Panc1 (cell line): ENCODE measurements at regions of chr6 and their contacts with region 1.

Region 1: GRCh38 chr6:30877419-30878371 is 6.6 kb upstream of the DDR1 start:
- DNase-seq: peak; percentile 73
- ATAC-seq: peak; percentile 90
- H3K4me3 ChIP-seq: peak overlapping the region; percentile 19 to 57; a peak in 3 of 4 replicates
- H3K27ac ChIP-seq: peak overlapping the region; percentile 82
- H3K4me1 ChIP-seq: peaks cover 23% of the 10 kb centered on the region
- H3K27me3 ChIP-seq: no peaks in the 10 kb centered on the region
- CTCF ChIP-seq: peak; percentile 96

Region 2: DNA sequence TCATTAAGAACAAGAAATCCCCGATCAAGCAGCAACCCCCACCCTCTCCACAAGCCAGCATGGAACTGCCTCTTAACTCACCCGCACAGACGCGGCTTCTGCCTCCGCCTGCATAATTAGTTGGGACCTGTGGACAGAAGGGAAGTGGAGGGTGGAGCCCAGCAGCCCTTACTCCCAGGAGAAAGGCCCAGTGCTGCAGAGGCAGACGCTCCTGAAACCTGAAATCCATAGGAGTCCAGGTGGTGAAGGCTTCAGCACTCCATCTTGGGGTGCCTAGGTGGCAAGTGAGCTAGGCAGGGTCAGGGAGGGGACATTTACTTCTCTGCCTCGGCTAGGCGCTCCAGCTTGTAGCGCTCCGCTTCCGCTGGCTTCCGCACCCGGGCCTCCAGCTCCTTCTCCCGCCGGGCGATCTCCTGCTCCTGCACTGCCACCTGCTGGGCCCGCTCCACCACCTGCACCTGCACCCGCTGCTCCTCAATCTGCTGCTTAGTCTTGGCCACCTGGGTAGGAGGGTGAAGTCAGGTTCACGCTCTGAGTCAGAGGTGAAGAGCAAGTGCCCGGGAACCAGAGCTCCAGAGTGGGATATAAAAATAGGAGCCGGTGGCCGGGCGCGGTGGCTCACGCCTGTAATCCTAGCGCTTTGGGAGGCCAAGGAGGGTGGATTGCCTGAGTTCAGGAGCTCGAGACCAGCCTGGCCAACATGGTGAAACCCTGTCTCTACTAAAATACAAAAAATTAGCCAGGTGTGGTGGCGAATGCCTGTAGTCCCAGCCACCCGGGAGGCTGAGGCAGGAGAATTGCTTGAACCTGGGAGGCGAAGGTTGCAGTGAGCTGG is 146.9 kb before region 1 on chr6:
- CTCF ChIA-PET with region 1: interaction called, 4 read pairs
- POLR2A ChIA-PET with region 1: no interaction called
- in situ Hi-C with region 1: no loop called
- intact Hi-C with region 1: loop called (anchors 5 kb)
- DNase-seq: no peak
- ATAC-seq: peak; percentile 59
- H3K4me3 ChIP-seq: no peak overlapping the region
- H3K27ac ChIP-seq: no peak overlapping the region
- H3K4me1 ChIP-seq: 0 out of 2 replicates have a peak, but pooled peaks cover 4% of the 10 kb centered on the region
- H3K27me3 ChIP-seq: no peaks in the 10 kb centered on the region
- CTCF ChIP-seq: peak; percentile 83

Region 3: DNA sequence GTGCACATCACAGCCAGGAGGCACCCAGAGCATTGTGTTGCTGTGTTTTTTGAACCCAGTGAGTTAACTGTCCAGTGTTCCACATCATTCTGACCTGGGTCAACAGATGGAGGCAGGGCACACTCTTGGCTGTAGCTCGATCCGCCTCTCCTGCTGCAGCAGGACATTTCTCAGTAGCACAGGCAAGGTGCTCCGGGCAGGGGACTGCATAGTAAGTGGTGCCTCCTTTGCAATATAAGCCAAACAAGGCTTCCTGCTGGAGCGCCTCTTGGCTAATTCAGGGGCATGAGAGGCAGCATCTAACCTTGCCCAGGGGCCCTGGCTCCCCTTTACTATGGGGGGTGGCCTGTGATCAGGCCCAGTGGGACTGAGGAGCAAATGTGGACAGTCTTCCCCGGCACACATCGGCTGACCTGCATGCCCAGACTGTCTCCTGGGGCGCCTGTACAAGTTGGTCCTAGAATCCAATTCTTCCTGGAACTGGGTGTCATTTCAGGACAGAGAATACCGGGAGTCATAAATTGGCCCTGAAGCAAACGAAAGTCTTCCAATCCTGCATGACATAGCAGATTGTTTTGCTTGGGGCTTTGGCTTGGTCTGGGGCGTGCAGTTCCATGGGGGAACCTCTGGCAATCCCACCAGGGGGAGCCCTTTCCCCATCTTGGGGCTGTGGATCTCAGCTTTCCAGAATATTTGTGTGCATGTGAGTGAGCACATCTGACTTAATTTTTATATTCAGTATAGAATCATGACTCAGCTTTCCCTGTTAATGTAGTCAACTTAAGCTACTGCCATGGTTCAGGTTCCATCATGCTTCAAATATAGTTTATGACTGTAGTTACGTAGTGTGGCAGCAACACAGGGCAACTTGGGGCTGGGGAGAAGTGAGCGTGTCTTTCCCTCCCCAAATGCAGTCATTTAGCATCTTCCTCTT is 49.4 kb before region 1 on chr6:
- CTCF ChIA-PET with region 1: interaction called, 4 read pairs
- POLR2A ChIA-PET with region 1: no interaction called
- in situ Hi-C with region 1: no loop called
- intact Hi-C with region 1: loop called (anchors 1 kb)
- DNase-seq: no peak
- ATAC-seq: peak; percentile 95
- H3K4me3 ChIP-seq: peak overlapping the region in 1 of 2 experiments; percentile 29; a peak in 2 of 4 replicates
- H3K27ac ChIP-seq: peak overlapping the region; percentile 85
- H3K4me1 ChIP-seq: peaks cover 28% of the 10 kb centered on the region
- H3K27me3 ChIP-seq: no peaks in the 10 kb centered on the region
- CTCF ChIP-seq: peak; percentile 95

Region 4: DNA sequence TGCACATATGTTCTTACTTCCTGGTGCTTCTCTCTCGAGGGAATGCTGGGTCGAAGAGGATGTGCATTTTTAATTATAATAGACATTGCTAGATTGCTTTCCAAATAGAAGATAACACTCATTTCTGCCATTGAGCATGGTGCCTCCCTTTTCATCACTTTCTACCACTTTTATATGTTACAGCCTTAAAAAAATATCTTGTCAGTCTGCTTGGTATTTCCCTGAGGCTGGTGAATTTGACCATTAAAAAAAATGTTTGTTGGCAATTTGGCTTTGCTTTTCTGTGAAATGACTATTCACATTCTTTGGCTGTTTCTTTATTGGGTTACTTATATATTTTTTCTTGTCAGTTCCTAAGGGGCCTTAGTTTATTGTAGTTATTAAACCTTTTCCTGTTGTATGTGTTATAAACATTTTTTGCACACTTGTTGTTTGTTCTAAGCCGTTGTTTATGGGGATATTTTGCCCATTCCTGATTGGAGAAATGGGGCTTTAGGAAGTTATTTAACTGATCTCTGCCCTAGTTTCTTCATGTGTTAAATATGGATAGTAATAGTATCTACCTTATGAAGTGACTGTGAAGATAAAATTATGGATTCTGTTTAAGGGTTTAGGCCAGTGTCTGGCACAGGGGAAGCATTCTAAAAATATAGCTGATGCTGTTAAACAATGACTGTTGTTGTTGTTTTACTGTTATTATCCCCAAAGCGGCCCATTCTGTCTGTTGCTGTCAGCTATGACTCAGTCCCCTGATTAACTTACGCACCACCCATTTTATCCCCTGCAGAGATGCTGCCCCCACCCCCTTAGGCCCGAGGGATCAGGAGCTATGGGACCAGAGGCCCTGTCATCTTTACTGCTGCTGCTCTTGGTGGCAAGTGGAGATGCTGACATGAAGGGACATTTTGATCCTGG is 10.5 kb after region 1 on chr6:
- CTCF ChIA-PET with region 1: no interaction called
- POLR2A ChIA-PET with region 1: no interaction called
- in situ Hi-C with region 1: no loop called
- intact Hi-C with region 1: no loop called
- DNase-seq: no peak
- ATAC-seq: no peak
- H3K4me3 ChIP-seq: no peak overlapping the region
- H3K27ac ChIP-seq: no peak overlapping the region
- H3K4me1 ChIP-seq: peaks cover 32% of the 10 kb centered on the region
- H3K27me3 ChIP-seq: no peaks in the 10 kb centered on the region
- CTCF ChIP-seq: no peak